ENCODE measurements at regions of chr15 and their contacts with region 1.

Region 1: GRCh38 chr15:85718271-85718971 is 76.3 kb downstream of the KLHL25 start:
- DNase-seq: no peak
- ATAC-seq: peak; percentile 68
- H3K4me3 ChIP-seq: no peak overlapping the region; the same call in 1 of the 2 replicates
- H3K27ac ChIP-seq: peak overlapping the region; percentile 82
- H3K4me1 ChIP-seq: peaks cover 42% of the 10 kb centered on the region
- H3K27me3 ChIP-seq: no peaks in the 10 kb centered on the region
- CTCF ChIP-seq: no peak
- EP300 ChIP-seq: no peak
- POLR2A ChIP-seq: no peak
- RAD21 ChIP-seq: no peak

Region 2: DNA sequence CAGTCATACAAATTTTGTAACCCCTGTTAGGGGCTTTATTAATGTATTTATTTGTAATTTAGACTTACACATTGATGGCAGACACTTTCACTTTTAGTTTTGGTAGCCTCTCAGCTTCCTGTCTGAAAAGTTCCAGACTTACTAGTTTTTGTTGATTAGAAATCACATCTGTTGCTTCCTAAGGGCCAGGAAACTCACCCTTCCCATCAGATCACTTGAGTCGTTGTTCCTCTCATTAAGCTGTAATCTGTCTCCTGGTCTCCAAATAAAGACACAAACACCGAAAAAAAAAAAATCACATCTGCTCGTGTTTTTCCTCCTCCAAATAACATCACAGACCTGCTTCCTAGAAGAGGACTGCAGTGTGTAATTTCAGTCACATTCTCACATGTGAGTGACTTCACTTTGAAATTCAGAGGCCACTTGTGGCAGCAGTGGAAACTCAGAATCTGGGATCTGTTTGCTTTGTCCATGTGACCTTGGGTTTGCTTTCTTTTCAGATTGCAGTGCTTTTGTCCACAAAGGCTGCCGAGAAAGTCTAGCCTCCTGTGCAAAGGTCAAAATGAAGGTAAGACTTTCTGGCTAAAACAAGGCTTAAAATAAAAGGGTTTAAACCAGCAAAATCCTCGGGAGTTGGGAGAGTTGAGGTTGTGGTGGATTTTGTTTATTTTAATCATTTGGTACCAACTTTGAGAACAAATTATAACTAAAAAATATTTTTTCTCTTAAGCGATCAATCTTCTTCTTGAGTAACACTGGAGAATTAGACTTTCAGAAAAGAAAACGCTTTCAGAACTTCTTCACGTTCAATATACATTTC is 10.7 kb before region 1 on chr15:
- CTCF ChIA-PET with region 1: interaction called, 7 read pairs
- POLR2A ChIA-PET with region 1: interaction called, 6 read pairs
- RAD21 ChIA-PET with region 1: interaction called, 30 read pairs
- SMC1A ChIA-PET with region 1: interaction called, 24 read pairs
- in situ Hi-C with region 1: no loop called
- intact Hi-C with region 1: no loop called
- DNase-seq: no peak
- ATAC-seq: peak; percentile 5
- H3K4me3 ChIP-seq: peak overlapping the region; percentile 60
- H3K27ac ChIP-seq: peak overlapping the region; percentile 99
- H3K4me1 ChIP-seq: peaks cover 66% of the 10 kb centered on the region
- H3K27me3 ChIP-seq: no peaks in the 10 kb centered on the region
- CTCF ChIP-seq: no peak
- EP300 ChIP-seq: no peak
- POLR2A ChIP-seq: no peak
- RAD21 ChIP-seq: no peak

Region 3: GRCh38 chr15:85741662-85742061 is 23.2 kb after region 1 on chr15:
- CTCF ChIA-PET with region 1: no interaction called
- POLR2A ChIA-PET with region 1: no interaction called
- RAD21 ChIA-PET with region 1: no interaction called
- SMC1A ChIA-PET with region 1: no interaction called
- in situ Hi-C with region 1: no loop called
- intact Hi-C with region 1: no loop called
- DNase-seq: no peak
- ATAC-seq: no peak
- H3K4me3 ChIP-seq: no peak overlapping the region
- H3K27ac ChIP-seq: no peak overlapping the region
- H3K4me1 ChIP-seq: no peaks in the 10 kb centered on the region
- H3K27me3 ChIP-seq: no peaks in the 10 kb centered on the region
- CTCF ChIP-seq: no peak
- EP300 ChIP-seq: no peak
- POLR2A ChIP-seq: no peak
- RAD21 ChIP-seq: no peak

Region 4: DNA sequence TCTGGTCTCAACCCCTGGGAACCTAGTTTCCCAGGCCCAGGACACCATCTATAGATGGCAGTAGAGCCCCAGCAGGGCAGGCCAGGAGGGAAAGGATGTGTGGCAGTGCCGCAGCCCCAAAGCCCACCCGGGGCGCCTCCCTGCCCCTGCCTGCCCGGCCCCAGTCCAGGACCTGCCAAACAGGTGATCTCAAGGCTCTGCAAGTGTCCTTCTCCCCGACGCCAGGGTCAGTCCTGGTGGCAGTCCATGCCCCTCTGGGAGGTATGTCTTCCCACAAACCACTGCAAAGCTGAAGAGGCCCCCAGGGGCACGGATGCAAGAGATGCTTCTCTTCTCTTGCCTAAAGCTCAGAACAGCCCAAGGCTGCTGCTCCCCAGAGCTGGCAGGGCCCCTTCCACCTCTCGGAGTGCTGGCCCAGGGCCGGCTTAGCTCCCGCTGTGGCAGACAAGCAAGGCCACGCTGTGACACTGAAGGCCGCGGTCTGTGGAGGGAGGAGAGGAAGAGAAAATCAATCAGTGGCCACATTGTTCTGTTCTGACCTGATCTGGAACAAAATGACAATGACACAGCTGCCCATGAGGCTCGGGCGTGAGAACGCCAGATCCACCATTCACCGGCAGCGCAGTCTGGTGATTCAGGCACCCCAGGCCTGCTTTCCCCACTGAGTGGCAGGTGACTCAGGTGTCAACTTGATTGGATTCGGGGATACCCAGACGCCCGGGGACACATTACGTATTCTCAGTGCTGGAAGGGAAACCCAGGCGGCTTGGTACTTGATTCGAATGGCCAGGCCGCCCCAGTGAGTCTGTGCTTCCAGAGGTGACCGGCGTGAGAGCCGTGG is 42.3 kb after region 1 on chr15:
- CTCF ChIA-PET with region 1: no interaction called
- POLR2A ChIA-PET with region 1: no interaction called
- RAD21 ChIA-PET with region 1: no interaction called
- SMC1A ChIA-PET with region 1: no interaction called
- in situ Hi-C with region 1: no loop called
- intact Hi-C with region 1: no loop called
- DNase-seq: no peak
- ATAC-seq: no peak
- H3K4me3 ChIP-seq: no peak overlapping the region
- H3K27ac ChIP-seq: no peak overlapping the region
- H3K4me1 ChIP-seq: no peaks in the 10 kb centered on the region
- H3K27me3 ChIP-seq: no peaks in the 10 kb centered on the region
- CTCF ChIP-seq: 0 out of 6 replicates have a peak, but pooled peaks of 2 of the 3 experiments have one; percentile 6 to 7
- EP300 ChIP-seq: no peak
- POLR2A ChIP-seq: no peak
- RAD21 ChIP-seq: 0 out of 2 replicates have a peak, but pooled peaks have one; percentile 41

Region 5: DNA sequence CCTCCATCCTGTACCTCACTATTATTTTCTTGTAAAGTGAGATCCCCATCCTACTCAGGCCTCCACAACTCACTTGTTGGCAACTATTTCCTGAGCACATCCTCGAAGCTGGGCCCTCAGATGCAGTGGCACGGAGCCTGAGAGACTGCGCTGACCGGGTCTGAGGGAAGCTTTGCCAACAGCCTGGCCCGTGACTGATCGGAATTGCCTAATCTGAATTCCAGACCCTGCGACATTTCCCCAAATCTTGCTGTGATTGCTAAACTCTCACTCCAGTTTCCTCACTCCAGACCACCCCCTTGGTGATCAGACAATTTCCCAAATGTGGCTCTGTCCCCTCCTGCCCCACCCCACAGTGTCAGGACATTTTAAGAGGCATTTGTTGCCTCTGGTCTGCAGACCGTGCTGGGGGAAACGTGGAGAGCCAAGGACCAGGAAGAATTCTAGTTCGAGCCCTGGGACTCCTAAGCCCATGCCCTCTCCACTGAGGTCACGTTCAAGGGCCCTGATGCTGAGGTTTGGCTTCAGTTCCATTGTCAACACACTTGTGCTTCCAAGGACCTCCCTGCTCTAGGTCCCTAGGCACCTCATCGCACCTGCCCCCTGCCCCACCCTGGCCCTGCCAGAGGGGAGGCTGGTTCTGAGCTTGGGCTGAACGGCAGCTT is 53.5 kb after region 1 on chr15:
- CTCF ChIA-PET with region 1: no interaction called
- POLR2A ChIA-PET with region 1: no interaction called
- RAD21 ChIA-PET with region 1: no interaction called
- SMC1A ChIA-PET with region 1: no interaction called
- in situ Hi-C with region 1: no loop called
- intact Hi-C with region 1: no loop called
- DNase-seq: no peak
- ATAC-seq: no peak
- H3K4me3 ChIP-seq: no peak overlapping the region
- H3K27ac ChIP-seq: no peak overlapping the region
- H3K4me1 ChIP-seq: no peaks in the 10 kb centered on the region
- H3K27me3 ChIP-seq: no peaks in the 10 kb centered on the region
- CTCF ChIP-seq: no peak
- EP300 ChIP-seq: no peak
- POLR2A ChIP-seq: no peak
- RAD21 ChIP-seq: no peak